ENCODE measurements at regions of chr10 and their contacts with region 1.

Region 1: DNA sequence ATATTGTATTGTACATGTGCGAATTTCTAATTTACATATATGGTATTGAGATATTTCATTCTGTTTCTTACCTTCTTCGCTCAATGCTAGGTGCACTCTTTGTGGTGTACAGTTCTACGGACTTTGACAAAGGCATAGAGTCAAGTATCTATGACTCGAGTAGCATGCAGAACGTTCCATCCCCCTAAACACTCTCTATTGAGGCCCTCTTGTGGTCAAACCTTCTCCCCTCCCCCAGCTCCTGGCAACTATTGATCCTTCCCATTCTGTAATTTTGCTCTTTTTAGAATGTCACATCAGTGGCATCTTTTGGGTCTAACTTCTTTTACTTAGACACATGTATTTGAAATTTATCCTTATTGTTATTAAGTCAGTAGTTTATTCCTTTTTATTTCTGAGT is 30.7 kb upstream of the GDF10 start:
- DNase-seq: no peak
- ATAC-seq: peak; percentile 75 to 80
- H3K4me3 ChIP-seq: no peak overlapping the region
- H3K27ac ChIP-seq: no peak overlapping the region
- H3K4me1 ChIP-seq: no peaks in the 10 kb centered on the region
- H3K27me3 ChIP-seq: no peaks in the 10 kb centered on the region
- CTCF ChIP-seq: peak in 3 of 5 experiments; percentile 22 to 52 (median 36)
- POLR2A ChIP-seq: no peak

Region 2: DNA sequence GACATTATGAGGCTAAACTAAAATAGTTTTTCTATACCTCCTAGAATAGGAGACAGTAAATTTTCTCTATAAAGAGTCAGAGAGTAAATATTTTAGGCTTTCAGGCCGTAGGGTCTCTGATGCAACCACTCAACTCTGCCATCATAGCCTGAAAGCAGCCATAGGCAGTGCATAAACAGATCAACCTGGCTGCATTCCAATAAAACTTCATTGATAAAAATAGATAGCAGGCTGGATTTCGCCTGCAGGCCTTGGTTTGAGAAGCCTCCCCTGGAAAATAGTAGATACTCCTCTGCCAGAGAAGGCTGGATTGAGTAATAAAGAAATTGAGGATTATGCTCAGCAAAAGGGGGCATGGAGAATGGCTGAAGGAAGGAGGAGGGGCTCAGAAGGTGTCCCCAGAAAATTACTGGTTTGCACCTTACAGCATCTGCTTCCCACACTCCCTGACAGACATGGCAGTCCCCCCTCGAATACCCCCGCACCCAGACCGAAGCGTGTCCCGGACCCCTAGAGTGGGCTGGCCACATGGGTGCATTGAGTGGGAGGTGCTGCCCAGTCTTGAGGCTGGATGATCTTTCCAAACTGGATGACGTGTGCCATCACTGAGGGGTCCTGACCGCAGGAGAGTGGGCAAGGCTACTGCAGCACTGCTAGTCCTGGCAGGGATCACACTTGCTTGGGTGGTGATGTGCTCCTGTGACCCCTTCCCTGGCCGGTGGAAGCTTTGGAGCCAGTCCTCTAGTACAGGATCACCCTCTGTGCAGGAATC is 231.5 kb before region 1 on chr10:
- in situ Hi-C with region 1: no loop called
- intact Hi-C with region 1: no loop called
- DNase-seq: no peak
- ATAC-seq: no peak
- H3K4me3 ChIP-seq: no peak overlapping the region
- H3K27ac ChIP-seq: no peak overlapping the region
- H3K4me1 ChIP-seq: no peaks in the 10 kb centered on the region
- H3K27me3 ChIP-seq: no peaks in the 10 kb centered on the region
- CTCF ChIP-seq: no peak
- POLR2A ChIP-seq: no peak

Region 3: DNA sequence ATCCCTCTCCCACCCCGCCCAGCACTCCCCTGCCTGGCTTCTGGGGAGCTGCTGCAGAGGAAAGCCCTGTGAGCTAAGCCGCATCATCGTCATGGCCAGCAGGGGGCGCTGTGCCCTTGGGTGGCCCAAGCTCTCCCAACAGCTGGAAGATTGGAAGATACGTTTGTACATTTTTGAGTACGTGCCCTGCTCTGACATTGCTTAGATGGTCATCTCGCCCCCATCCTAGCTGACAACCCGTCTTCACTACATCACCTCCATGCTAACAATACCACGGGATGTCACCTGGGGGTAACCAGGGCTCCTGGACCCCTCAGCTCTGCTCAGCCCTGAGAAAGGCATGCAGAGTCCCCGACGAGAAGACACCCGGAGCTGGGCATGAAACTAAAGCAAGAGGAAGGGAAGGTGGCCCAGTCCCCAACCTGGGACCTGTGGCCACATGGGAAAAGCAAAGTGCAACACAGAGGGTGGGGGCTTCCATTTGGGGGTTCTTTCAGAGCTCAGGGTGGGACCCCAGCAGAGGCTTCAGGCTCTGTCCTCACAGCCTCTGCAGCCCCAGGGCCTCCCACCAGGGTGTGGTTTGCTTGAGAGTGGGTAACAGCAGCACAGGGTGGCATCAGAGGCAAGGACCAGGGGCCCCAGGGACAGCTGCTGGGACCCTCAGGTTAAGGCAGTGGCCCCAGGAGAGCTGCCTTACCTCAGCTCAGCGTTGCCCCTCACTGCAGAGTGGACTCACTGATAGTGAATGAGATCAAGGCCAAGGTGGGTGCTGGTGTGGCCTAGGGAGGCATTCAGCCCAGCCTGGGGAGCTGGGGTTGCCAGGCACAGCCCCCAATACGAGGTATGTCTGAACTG is 221.4 kb before region 1 on chr10:
- in situ Hi-C with region 1: no loop called
- intact Hi-C with region 1: loop called (anchors 1 kb)
- DNase-seq: peak; percentile 52 to 68
- ATAC-seq: peak; percentile 72 to 85
- H3K4me3 ChIP-seq: no peak overlapping the region
- H3K27ac ChIP-seq: no peak overlapping the region
- H3K4me1 ChIP-seq: peaks cover under 1 to 4% of the 10 kb centered on the region in 2 donors
- H3K27me3 ChIP-seq: no peaks in the 10 kb centered on the region
- CTCF ChIP-seq: peak; percentile 63 to 91 (median 88)
- POLR2A ChIP-seq: no peak

Region 4: GRCh38 chr10:49177391-49178355 is 1908.4 kb after region 1 on chr10:
- in situ Hi-C with region 1: no loop called
- intact Hi-C with region 1: no loop called
- DNase-seq: peak; percentile 26 to 34
- ATAC-seq: peak; percentile 82 to 86
- H3K4me3 ChIP-seq: no peak overlapping the region
- H3K27ac ChIP-seq: peak overlapping the region; percentile 65 to 72 (median 70)
- H3K4me1 ChIP-seq: peaks cover 4 to 7% of the 10 kb centered on the region in 2 donors
- H3K27me3 ChIP-seq: no peaks in the 10 kb centered on the region
- CTCF ChIP-seq: no peak
- POLR2A ChIP-seq: no peak

Measured in gastrocnemius medialis (tissue), 4 donors.